B cell (primary cell): ENCODE measurements at regions of chr22 and their contacts with region 1.

Region 1: GRCh38 chr22:35812600-35812999 is 94.9 kb downstream of the APOL5 start:
- DNase-seq: no peak
- ATAC-seq: no peak
- H3K4me3 ChIP-seq: no peak overlapping the region
- H3K4me3 Mint-ChIP-seq: no peak overlapping the region
- H3K27ac ChIP-seq: no peak overlapping the region
- H3K27ac Mint-ChIP-seq: no peak overlapping the region
- H3K4me1 ChIP-seq: no peaks in the 10 kb centered on the region
- H3K4me1 Mint-ChIP-seq: no peaks in the 10 kb centered on the region
- H3K27me3 ChIP-seq: no peaks in the 10 kb centered on the region
- H3K27me3 Mint-ChIP-seq: peaks cover 4% of the 10 kb centered on the region
- CTCF ChIP-seq: no peak

Region 2: DNA sequence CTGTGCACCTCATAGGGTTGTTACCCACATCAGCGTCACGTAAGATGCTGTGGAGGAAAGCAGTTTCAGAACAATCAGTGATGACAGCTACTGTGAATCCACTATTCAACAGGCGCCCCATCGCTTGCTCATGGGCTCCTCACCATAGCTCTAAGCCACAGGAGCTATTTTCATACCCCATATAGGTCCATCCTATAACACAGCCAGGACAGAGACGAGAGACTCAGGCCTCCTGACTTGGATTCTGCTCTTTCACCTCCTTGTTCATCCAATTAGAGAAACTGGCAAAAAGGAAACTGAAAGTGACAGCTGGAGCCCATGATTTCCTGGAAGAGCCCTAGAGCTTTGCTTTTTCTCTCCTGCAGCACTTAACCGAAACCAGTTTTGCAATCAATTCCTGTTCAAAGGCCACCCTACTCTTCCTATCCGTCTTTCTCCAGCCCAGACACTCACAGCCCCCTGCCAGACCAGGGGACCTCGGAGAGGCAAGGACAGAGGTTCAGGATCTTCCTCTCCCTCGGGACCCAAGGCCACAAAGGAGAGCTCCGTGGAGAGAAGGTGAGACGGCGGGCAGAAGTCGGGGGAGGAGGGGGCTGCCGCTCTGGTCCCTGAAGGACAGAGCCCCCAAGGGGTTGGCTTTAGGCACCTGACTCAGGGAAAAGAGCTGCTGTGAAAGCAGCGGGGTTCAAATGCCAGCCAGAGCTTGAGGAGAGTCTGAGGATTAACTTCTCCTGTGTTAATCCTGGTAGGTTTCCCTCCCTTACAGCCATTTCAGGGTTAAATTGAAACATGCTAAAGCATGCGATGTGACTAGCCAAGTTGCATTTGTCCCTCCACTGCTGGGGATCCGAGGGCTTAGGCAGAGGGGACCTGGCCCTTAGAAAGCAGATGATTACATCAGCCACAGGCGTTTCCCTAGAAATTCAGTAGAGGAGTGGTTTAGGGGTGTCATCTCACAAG is 164.3 kb before region 1 on chr22 and contains the start of gene APOL6:
- CTCF ChIA-PET with region 1: no interaction called
- POLR2A ChIA-PET with region 1: interaction called, 10 read pairs
- intact Hi-C with region 1: no loop called
- DNase-seq: peak; percentile 69
- ATAC-seq: peak; percentile 65
- H3K4me3 ChIP-seq: peak within 1 kb of the TSS; percentile 55 to 86 (median 74)
- H3K4me3 Mint-ChIP-seq: peak within 1 kb of the TSS; percentile 100
- H3K27ac ChIP-seq: peak within 1 kb of the TSS; percentile 69 to 79
- H3K27ac Mint-ChIP-seq: peak within 1 kb of the TSS; percentile 97
- H3K4me1 ChIP-seq: peaks cover 24 to 29% of the 10 kb centered on the region in 2 donors
- H3K4me1 Mint-ChIP-seq: peaks cover 37% of the 10 kb centered on the region
- H3K27me3 ChIP-seq: no peaks in the 10 kb centered on the region
- H3K27me3 Mint-ChIP-seq: no peaks in the 10 kb centered on the region
- CTCF ChIP-seq: no peak
- total RNA-seq, gene APOL6: 7.0 and 7.7 TPM in 2 replicates

Region 3: GRCh38 chr22:35777335-35777975 is 35.1 kb before region 1 on chr22:
- CTCF ChIA-PET with region 1: no interaction called
- POLR2A ChIA-PET with region 1: no interaction called
- intact Hi-C with region 1: no loop called
- DNase-seq: no peak
- ATAC-seq: no peak
- H3K4me3 ChIP-seq: no peak overlapping the region
- H3K4me3 Mint-ChIP-seq: no peak overlapping the region
- H3K27ac ChIP-seq: no peak overlapping the region
- H3K27ac Mint-ChIP-seq: no peak overlapping the region
- H3K4me1 ChIP-seq: no peaks in the 10 kb centered on the region
- H3K4me1 Mint-ChIP-seq: no peaks in the 10 kb centered on the region
- H3K27me3 ChIP-seq: peaks cover 0 to 17% (median 0%) of the 10 kb centered on the region in 4 experiments
- H3K27me3 Mint-ChIP-seq: peaks cover 30% of the 10 kb centered on the region
- CTCF ChIP-seq: no peak